CD4-positive, alpha-beta memory T cell (primary cell): ENCODE measurements at regions of chr4 and their contacts with region 1.

Region 1: DNA sequence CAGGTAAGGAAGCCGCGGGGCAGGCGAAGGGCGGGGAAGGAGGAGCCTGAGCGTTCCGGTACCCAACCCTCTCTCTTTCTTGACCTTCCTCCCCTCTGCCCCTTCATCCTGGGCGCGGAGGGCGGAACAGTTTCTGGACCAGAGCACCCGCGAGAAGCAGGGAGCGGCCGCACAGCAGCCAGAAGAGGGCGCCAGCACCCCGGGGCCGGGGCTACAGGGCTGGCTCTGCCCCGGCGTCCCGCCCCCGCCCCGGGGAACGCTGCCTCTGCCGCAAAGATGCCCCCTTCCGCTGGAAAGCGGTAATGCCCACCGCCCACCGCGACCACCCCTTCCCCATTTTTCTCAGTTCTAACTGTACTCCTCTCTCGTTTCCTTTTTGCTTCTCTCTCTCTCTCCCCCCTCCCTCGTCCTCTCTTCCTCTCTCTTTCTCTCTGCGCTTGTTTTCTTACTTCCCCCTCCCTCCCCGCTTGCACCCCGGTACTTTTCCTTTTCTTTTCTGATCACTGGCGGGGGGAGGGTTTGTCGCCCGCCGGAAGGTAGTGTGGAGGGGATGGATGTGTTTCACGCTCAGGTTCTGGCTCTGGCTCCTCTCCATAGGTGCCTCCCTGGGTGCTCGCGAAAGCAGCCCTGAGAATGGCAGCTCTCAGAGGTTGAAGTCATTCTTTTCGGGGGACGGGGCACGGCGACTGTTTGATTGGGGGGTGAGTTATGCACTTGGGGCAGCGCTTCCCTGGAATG is 13.1 kb upstream of the PRDM8 start:
- DNase-seq: peak; percentile 89 to 93 (median 91)
- H3K4me3 ChIP-seq: peak overlapping the region; percentile 88 to 99
- H3K4me3 Mint-ChIP-seq: peak overlapping the region; percentile 95 to 100 (median 100)
- H3K27ac ChIP-seq: peak overlapping the region; percentile 85
- H3K27ac Mint-ChIP-seq: peak overlapping the region; percentile 94 to 99 (median 98)
- H3K4me1 ChIP-seq: peaks cover 50% of the 10 kb centered on the region
- H3K4me1 Mint-ChIP-seq: peaks cover 38 to 71% (median 47%) of the 10 kb centered on the region in 4 donors
- H3K27me3 ChIP-seq: no peaks in the 10 kb centered on the region
- H3K27me3 Mint-ChIP-seq: no peaks in the 10 kb centered on the region

Region 2: GRCh38 chr4:80058740-80059139 is 125.5 kb before region 1 on chr4:
- CTCF ChIA-PET with region 1: interaction called, 3 read pairs
- POLR2A ChIA-PET with region 1: interaction called, 7 read pairs
- intact Hi-C with region 1: loop called (anchors 5 kb)
- DNase-seq: peak; percentile 75 to 90 (median 86)
- H3K4me3 ChIP-seq: peak overlapping the region in 1 of 2 donors; percentile 13
- H3K4me3 Mint-ChIP-seq: peak overlapping the region; percentile 74 to 95 (median 84)
- H3K27ac ChIP-seq: peak overlapping the region; percentile 85
- H3K27ac Mint-ChIP-seq: peak overlapping the region; percentile 97 to 100 (median 99)
- H3K4me1 ChIP-seq: peaks cover 65% of the 10 kb centered on the region
- H3K4me1 Mint-ChIP-seq: peaks cover 37 to 79% (median 54%) of the 10 kb centered on the region in 4 donors
- H3K27me3 ChIP-seq: no peaks in the 10 kb centered on the region
- H3K27me3 Mint-ChIP-seq: no peaks in the 10 kb centered on the region

Region 3: GRCh38 chr4:80138551-80139538 is 45.4 kb before region 1 on chr4:
- CTCF ChIA-PET with region 1: interaction called, 52 read pairs
- POLR2A ChIA-PET with region 1: interaction called, 26 read pairs
- intact Hi-C with region 1: loop called (anchors 1 kb)
- DNase-seq: peak; percentile 55 to 81 (median 66)
- H3K4me3 ChIP-seq: no peak overlapping the region
- H3K4me3 Mint-ChIP-seq: peak overlapping the region in 7 of 8 donors; percentile 9 to 68 (median 59)
- H3K27ac ChIP-seq: peak overlapping the region; percentile 45
- H3K27ac Mint-ChIP-seq: peak overlapping the region; percentile 84 to 94 (median 93)
- H3K4me1 ChIP-seq: peaks cover 58% of the 10 kb centered on the region
- H3K4me1 Mint-ChIP-seq: peaks cover 33 to 67% (median 43%) of the 10 kb centered on the region in 4 donors
- H3K27me3 ChIP-seq: no peaks in the 10 kb centered on the region
- H3K27me3 Mint-ChIP-seq: no peaks in the 10 kb centered on the region

Region 4: DNA sequence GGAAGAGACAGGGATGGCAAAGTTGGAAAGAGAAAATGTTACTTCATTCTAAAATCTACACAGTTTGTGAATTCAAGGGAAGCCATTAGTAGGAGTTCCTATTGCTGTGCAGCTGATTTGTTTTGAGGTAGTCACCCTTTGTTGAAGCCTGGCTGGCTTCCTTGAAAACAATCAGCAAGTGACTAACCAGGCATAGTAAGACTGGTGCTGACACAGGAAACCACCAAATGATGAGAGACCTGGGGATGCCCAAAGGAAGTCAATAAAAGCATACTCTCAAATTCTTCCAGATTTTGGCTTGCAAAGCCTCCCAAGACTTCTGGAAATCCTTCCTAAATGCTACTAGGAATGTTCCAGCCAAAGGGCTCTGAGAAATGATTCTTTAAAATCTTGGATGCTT is 10.8 kb before region 1 on chr4:
- CTCF ChIA-PET with region 1: interaction called, 123 read pairs
- POLR2A ChIA-PET with region 1: interaction called, 160 read pairs
- intact Hi-C with region 1: loop called (anchors 1 kb)
- DNase-seq: peak; percentile 63 to 85 (median 72)
- H3K4me3 ChIP-seq: no peak overlapping the region
- H3K4me3 Mint-ChIP-seq: peak overlapping the region; percentile 43 to 82 (median 76)
- H3K27ac ChIP-seq: peak overlapping the region; percentile 71
- H3K27ac Mint-ChIP-seq: peak overlapping the region; percentile 93 to 96 (median 95)
- H3K4me1 ChIP-seq: peaks cover 67% of the 10 kb centered on the region
- H3K4me1 Mint-ChIP-seq: peaks cover 55 to 78% (median 67%) of the 10 kb centered on the region in 4 donors
- H3K27me3 ChIP-seq: no peaks in the 10 kb centered on the region
- H3K27me3 Mint-ChIP-seq: no peaks in the 10 kb centered on the region

Region 5: DNA sequence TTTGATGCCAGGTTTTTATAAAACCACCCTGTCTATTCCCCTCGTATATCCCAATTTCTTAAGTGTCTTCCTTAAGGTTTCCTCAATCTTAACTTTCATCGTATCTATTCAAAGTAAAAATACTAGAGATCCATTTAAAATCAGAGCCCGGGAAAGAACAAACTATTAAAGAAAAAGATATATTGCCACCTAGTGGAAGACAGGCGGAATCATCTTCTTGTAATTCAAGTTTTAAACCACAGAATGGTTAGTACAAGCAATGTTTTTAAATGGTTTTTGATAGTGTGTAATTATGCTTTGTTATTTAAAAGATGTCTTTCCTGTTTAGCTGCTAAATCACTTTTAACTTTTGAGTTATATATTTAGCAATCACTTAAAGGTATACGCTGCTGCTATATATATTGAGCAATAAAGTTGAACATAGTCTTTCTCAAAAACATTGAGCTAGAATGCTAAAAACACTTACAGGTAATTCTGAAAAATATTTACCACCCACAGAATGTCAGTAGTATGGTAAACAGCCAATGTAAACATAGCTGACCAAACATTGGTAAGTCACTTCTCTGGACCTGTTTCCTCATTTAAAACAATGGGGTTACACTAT is 31.3 kb after region 1 on chr4:
- CTCF ChIA-PET with region 1: interaction called, 6 read pairs
- POLR2A ChIA-PET with region 1: no interaction called
- intact Hi-C with region 1: loop called (anchors 1 kb)
- DNase-seq: peak in 4 of 5 donors; percentile 48 to 55 (median 51)
- H3K4me3 ChIP-seq: no peak overlapping the region
- H3K4me3 Mint-ChIP-seq: peak overlapping the region in 1 of 8 donors; percentile 4
- H3K27ac ChIP-seq: no peak overlapping the region
- H3K27ac Mint-ChIP-seq: no peak overlapping the region
- H3K4me1 ChIP-seq: no peaks in the 10 kb centered on the region
- H3K4me1 Mint-ChIP-seq: peaks cover 0 to 1% (median 0%) of the 10 kb centered on the region in 4 donors
- H3K27me3 ChIP-seq: peaks cover 9% of the 10 kb centered on the region
- H3K27me3 Mint-ChIP-seq: peaks cover 8% of the 10 kb centered on the region in 2 donors